ENCODE measurements at regions of chr9 and their contacts with region 1.

Region 1: DNA sequence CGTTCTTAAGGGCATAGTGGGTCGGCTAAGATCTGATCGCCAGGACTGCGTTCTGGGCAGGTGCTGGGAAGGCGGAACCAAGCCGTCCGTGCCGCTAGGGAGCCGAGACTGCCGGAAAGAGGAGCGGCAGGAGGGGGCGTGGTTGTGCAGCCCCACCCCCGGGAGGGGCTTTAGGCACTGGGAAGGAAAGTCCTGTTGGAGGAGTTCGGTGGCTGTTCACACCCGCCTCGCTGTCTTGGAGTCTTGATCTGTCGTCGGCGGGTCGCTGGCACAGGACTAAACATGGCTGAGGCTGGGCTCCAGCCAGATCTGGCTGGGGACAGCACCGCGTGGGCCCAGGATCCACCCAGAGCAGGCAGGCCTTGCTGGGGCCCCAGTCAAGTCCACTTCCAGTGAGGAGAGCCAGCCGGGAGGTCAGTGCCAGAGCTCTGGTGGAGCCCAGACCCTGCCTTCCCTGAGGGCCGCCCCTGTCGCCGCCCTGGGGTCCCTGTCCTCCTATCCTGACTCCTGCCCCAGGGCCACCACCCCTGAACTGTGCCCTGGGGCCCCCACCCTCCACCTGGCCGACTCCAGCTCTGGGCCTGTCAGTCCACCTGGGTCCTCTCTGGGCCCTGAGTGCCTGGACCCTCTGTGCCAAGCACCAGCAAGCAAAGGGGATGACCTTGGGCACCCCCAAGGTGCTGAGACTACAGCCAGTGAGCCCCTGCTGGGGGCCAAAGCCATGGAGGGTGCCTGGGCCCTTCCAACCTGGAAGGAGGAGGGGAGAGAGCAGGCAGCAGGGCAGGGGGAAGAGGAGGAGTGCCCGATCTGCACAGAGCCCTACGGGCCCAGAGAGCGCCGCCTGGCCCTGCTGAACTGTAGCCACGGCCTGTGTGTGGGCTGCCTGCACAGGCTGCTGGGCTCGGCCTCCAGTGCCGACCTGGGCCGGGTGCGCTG is 4.5 kb downstream of the RNF208 start:
- DNase-seq: peak; percentile 66
- ATAC-seq: peak; percentile 69
- H3K4me3 ChIP-seq: peak overlapping the region; percentile 68 to 83 (median 77)
- H3K27ac ChIP-seq: peak overlapping the region; percentile 84
- H3K4me1 ChIP-seq: peaks cover 29% of the 10 kb centered on the region
- H3K27me3 ChIP-seq: no peaks in the 10 kb centered on the region
- CTCF ChIP-seq: peak; percentile 50
- EP300 ChIP-seq: no peak
- POLR2A ChIP-seq: no peak; a peak in 1 of 4 replicates
- RAD21 ChIP-seq: 0 out of 2 replicates have a peak, but pooled peaks have one; percentile 11

Region 2: DNA sequence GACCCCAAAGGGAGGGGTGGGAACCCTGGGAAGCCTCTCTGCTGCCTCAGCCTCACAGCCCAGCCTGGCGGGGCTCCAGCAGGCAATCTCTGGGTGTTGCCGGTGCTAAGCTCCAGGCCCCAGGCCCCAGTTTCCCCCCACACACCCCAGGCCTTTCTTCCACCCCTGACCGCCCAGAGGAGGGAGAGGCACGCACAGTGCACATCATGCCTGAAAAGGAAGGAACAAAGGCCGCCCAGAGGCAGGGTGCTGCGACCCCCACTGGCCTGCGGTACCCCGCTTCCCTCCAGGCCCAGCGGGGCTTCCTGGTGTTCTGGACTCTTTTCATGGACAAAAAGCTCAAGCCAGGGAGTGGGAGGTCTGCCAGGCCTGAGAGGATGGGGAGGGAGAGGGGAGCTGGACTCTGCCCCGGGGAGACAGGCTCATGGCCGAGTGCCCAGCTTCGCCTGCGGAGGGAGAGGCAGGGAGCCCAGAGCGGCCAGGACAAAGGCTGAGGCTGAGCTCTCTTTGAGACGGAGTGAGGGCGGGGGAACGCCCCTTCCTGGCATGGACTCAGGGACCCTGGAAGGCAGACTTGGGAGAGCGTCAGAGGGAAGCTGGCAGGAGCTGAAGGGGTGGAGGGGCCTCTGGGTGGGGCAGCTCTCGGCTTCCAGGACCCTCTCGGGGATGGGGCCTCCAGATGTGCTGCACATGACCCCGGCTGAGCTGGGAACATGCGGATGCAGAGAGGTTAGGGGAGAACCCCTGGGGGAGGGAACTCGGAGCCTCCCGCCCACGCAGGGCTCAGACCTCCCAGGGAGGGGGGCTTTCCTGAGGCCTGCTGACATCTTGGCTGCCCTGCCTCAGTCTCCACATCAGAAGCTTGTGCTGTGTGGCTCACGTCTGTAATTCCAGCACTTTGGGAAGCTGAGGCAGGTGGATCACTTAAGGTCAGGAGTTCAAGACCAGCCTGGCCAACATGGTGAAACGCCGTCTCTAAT is 161.9 kb before region 1 on chr9:
- CTCF ChIA-PET with region 1: no interaction called
- POLR2A ChIA-PET with region 1: no interaction called
- in situ Hi-C with region 1: no loop called
- intact Hi-C with region 1: no loop called
- DNase-seq: peak; percentile 86
- ATAC-seq: peak; percentile 79
- H3K4me3 ChIP-seq: peak overlapping the region; percentile 64 to 84 (median 70)
- H3K27ac ChIP-seq: peak overlapping the region; percentile 96
- H3K4me1 ChIP-seq: peaks cover 57% of the 10 kb centered on the region
- H3K27me3 ChIP-seq: no peaks in the 10 kb centered on the region; a peak in 2 of 5 replicates
- CTCF ChIP-seq: peak; percentile 29
- EP300 ChIP-seq: peak in 1 of 2 experiments; percentile 47; a peak in 1 of 4 replicates
- POLR2A ChIP-seq: no peak
- RAD21 ChIP-seq: no peak

Region 3: GRCh38 chr9:137188490-137189296 is 28.9 kb before region 1 on chr9 and contains the starts of genes ANAPC2 and SSNA1:
- CTCF ChIA-PET with region 1: no interaction called
- POLR2A ChIA-PET with region 1: interaction called, 38 read pairs
- in situ Hi-C with region 1: no loop called
- intact Hi-C with region 1: no loop called
- DNase-seq: peak; percentile 85
- ATAC-seq: peak; percentile 84
- H3K4me3 ChIP-seq: peak within 1 kb of the TSS; percentile 84 to 99 (median 97)
- H3K27ac ChIP-seq: peak within 1 kb of the TSS; percentile 81
- H3K4me1 ChIP-seq: peaks cover 28% of the 10 kb centered on the region
- H3K27me3 ChIP-seq: no peaks in the 10 kb centered on the region
- CTCF ChIP-seq: peak; percentile 88
- EP300 ChIP-seq: peak in 1 of 2 experiments; percentile 18; a peak in 1 of 4 replicates
- POLR2A ChIP-seq: peak in 1 of 2 experiments; percentile 41; a peak in 1 of 4 replicates
- RAD21 ChIP-seq: peak; percentile 92
- total RNA-seq, gene ANAPC2: 7.4 and 12.3 TPM in 2 replicates
- total RNA-seq, gene SSNA1: 41.2 and 49.4 TPM in 2 replicates

Measured in HepG2 (cell line).